ENCODE measurements at regions of chr11 and their contacts with region 1.

Region 1: DNA sequence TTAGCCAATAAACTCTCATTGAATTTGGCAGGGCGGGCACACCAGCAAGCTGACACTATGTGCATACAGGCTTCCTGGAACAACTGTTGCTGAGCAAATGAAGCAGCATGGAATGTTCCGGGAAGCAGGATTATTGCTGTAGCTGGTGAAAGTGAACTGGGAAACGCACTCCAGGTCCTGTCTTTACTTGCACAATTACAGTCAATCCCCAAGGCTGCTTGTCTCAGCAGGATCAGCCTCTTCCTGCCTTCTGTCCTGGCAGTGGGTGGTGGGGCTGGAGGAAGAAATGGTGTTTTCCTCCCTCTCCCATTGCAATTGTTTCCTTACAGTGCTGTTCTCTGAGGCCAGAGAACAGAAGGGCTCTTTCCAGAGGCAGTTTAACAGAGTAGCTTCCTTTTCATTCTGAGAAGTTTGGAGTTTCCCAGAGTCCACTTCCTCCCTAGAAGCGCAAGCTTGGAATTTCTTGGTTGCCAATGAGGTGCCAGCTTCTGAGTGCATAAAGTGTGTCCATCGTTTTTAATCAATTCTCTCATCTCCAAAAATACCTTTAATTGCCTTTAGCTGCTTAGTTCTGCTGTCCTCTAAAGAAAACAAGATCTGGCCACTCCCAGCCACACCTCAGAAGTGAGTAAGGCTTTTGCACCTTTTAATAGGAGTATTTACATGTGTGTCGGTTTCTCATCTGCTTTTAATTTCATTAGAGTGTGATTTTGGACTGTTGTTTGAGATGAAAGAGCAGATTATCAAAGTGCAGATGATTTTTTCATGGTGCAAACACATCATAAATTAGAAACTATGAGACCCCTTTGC is 19.9 kb downstream of the CD44 start:
- DNase-seq: no peak
- H3K4me3 ChIP-seq: no peak overlapping the region
- H3K27ac ChIP-seq: peak overlapping the region; percentile 84
- H3K4me1 ChIP-seq: peaks cover 97% of the 10 kb centered on the region
- H3K27me3 ChIP-seq: no peaks in the 10 kb centered on the region
- CTCF ChIP-seq: no peak
- POLR2A ChIP-seq: no peak

Region 2: GRCh38 chr11:35089666-35090065 is 69.2 kb before region 1 on chr11:
- intact Hi-C with region 1: loop called (anchors 10 kb)
- DNase-seq: peak in 1 of 2 donors; percentile 6
- H3K4me3 ChIP-seq: no peak overlapping the region
- H3K27ac ChIP-seq: no peak overlapping the region
- H3K4me1 ChIP-seq: peaks cover 33% of the 10 kb centered on the region
- H3K27me3 ChIP-seq: no peaks in the 10 kb centered on the region
- CTCF ChIP-seq: no peak
- POLR2A ChIP-seq: no peak

Region 3: DNA sequence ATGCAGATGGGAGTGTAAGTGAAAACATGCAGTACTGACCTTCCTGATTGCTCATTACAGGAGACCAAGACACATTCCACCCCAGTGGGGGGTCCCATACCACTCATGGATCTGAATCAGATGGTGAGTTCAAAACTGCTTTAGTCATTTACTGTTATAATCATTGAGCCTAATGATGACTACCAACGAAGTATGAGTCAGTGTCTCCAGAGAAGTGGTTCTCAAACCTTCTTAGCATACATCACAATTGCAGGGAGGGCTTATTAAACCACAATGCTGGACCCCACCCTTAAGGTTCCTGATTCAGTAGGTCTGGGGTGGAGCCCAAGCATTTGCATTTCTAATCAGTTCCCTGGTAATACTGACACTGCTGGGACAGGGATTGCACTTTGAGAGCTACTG is 55.9 kb after region 1 on chr11:
- intact Hi-C with region 1: no loop called
- DNase-seq: no peak
- H3K4me3 ChIP-seq: no peak overlapping the region
- H3K27ac ChIP-seq: peak overlapping the region; percentile 31
- H3K4me1 ChIP-seq: peaks cover 40% of the 10 kb centered on the region
- H3K27me3 ChIP-seq: no peaks in the 10 kb centered on the region
- CTCF ChIP-seq: no peak
- POLR2A ChIP-seq: no peak

Measured in vagina (tissue), 2 donors.